Activated T-helper 2 cell treated with anti-CD3 and anti-CD28 coated beads, Interferon-gamma antibody, Interleukin-2, Interleukin-4, amounts not matched to agents 10 μg/mL and 5 μg/mL and 100 μg/mL, durations not matched to agents 14 hours and 24 hours and 36 hours (primary cell): ENCODE measurements at regions of chr2 and their contacts with region 1.

Region 1: DNA sequence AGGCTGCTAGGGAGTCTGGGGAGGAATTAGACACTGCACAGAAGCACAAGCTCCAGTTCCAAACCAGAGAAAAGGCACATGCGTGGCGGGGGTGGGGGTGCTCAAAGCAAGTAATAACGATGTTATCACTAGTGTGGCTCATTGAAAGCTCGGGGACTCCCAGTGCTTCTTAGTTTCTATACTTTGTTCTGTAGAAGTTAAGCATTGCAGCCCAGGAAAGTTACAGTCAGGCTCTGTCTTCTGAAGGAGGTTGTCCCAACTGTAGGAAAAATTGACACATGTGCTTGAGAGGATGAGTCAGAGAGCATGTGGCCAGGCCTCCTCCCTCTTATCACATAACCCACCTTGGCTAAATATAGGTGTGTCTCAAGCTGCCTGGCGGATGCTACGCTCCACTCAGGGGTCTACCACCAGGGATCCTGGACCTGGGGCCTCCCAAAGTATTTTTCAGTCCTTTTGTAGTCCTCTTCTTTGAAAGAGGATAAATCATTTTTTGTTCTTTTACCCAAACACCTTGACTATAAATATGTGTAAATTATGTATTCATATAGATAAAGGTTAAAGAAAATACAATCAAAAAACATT is 3.8 kb downstream of the GALNT5 start:
- DNase-seq: peak; percentile 37
- H3K4me3 Mint-ChIP-seq: peak overlapping the region; percentile 60
- H3K27ac Mint-ChIP-seq: peak overlapping the region; percentile 88
- H3K4me1 Mint-ChIP-seq: peaks cover 52% of the 10 kb centered on the region
- H3K27me3 Mint-ChIP-seq: peaks cover 2% of the 10 kb centered on the region

Region 2: DNA sequence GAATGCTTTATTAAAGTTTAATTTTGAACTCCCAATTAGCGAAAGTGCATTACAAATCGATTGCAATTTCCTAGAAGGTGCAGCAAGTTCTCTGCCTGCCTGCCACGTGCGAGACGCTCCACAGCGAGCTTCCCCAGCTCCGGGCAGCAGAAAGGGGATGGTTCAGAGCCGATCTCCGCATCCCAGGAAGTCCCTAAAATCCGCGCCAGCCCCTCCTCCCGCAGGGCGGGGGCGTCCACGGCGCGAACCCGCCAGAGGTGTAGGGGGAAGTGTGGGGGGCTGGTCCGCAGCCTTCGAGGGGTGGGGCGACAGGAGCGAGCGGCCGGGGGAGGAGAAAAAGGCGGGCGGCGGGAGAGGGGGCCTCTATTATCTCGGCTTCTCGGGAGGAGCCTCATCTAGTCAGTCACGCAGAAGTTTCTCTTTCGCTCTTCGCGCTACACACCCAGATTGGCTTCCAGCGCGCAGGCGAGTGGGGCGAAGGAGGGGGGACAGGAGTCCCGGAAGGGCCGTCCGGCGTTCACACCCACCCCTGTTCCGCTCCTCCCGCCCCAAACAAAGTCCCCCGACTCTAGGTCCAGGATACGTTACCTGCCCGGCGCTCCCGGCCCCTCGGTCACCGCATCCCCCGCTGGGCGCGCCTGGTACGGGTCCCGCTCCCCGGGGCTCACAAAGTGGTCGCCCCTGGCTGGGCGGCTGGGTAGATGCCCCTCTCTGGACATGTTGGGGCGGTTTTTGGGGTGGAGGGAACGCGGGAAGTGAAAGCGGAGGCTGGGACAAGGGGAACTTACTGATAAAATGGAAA is 919.6 kb before region 1 on chr2:
- intact Hi-C with region 1: loop called (anchors 2 kb)
- DNase-seq: peak; percentile 88
- H3K4me3 Mint-ChIP-seq: peak overlapping the region; percentile 87
- H3K27ac Mint-ChIP-seq: peak overlapping the region; percentile 94
- H3K4me1 Mint-ChIP-seq: peaks cover 48% of the 10 kb centered on the region
- H3K27me3 Mint-ChIP-seq: no peaks in the 10 kb centered on the region

Region 3: DNA sequence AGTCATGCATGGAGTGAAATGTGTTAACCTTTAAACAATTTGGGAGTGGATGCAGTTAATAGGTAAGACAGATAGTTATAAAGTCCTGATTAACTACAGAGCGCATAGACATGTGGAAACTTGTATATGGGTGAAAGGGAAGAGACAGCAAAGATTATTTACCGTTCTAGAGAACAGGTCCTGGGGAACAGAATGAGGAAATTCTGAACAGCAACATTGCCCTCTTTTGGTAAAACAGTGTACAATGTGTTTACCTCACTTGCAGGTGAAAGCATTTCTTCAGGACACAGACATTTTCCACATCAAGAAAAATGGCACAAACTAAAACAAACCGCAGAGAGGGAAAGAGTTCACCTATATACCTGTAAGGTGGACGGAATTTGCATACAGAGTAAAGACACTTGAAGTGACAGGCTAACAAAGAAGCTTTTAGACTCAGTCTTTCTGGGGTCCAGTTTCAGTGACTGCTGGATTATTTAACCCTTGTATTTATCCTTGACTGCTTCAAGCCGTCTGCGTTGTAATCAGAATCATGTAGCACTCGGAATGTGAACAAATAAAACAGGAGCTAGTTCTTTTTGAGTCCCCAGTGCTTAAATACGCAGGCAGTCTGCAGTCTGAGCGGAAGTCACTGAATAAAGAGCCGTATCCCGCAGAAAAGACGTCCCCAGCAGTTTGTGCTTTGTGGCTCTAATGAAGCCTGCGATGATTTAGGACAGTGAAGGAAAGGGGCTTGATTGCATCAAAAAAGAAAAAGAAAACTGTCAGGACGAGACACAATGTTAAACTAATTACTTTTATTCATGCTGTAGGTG is 368.6 kb before region 1 on chr2:
- intact Hi-C with region 1: loop called (anchors 1 kb)
- DNase-seq: no peak
- H3K4me3 Mint-ChIP-seq: peak overlapping the region; percentile 27
- H3K27ac Mint-ChIP-seq: no peak overlapping the region
- H3K4me1 Mint-ChIP-seq: peaks cover 42% of the 10 kb centered on the region
- H3K27me3 Mint-ChIP-seq: peaks cover 55% of the 10 kb centered on the region

Region 4: GRCh38 chr2:156982615-156983014 is 278.7 kb before region 1 on chr2:
- intact Hi-C with region 1: no loop called
- DNase-seq: no peak
- H3K4me3 Mint-ChIP-seq: no peak overlapping the region
- H3K27ac Mint-ChIP-seq: no peak overlapping the region
- H3K4me1 Mint-ChIP-seq: no peaks in the 10 kb centered on the region
- H3K27me3 Mint-ChIP-seq: no peaks in the 10 kb centered on the region

Region 5: GRCh38 chr2:157221394-157221988 is 39.8 kb before region 1 on chr2:
- intact Hi-C with region 1: no loop called
- DNase-seq: no peak
- H3K4me3 Mint-ChIP-seq: no peak overlapping the region
- H3K27ac Mint-ChIP-seq: no peak overlapping the region
- H3K4me1 Mint-ChIP-seq: no peaks in the 10 kb centered on the region
- H3K27me3 Mint-ChIP-seq: peaks cover 26% of the 10 kb centered on the region

Region 6: GRCh38 chr2:157302492-157303099 is 41.3 kb after region 1 on chr2:
- intact Hi-C with region 1: loop called (anchors 5 kb)
- DNase-seq: no peak
- H3K4me3 Mint-ChIP-seq: no peak overlapping the region
- H3K27ac Mint-ChIP-seq: no peak overlapping the region
- H3K4me1 Mint-ChIP-seq: peaks cover 16% of the 10 kb centered on the region
- H3K27me3 Mint-ChIP-seq: peaks cover 10% of the 10 kb centered on the region

Region 7: DNA sequence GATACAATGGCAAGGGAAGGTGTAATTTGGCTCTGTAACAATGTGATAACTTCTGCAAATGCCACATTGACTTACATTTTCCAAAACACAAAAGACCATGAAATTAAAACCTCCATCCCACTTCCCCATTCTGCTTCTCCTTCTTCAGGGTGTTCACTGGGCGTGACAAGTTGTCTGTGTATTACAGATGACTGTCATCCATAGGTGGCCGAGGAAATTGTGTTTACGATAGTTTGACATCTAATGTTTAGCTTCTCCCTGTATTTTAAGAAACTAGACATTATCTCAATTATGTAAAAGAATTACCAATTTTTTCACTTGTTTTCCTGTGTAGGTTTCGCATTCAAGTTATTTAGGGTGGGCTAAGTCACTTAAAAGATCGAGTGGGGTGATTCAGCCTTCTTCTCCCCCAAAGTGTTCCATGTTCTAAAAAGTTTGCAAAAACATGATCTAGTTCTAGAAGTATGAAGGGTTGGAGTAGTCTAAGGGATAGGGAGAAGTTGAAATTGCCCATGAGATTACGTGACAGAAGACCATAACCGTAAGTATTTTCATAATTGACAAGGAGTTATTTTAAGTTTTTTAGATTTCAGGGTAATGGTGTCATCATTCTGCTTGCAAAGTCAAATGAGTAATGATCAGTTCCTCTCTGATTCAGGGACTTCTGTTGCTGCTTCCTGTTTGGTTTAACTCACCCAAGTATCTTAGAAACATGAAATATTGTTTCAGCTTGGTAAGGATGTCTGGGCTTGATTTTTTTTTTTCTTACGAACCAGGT is 207.8 kb after region 1 on chr2:
- intact Hi-C with region 1: loop called (anchors 1 kb)
- DNase-seq: no peak
- H3K4me3 Mint-ChIP-seq: peak overlapping the region; percentile 69
- H3K27ac Mint-ChIP-seq: peak overlapping the region; percentile 96
- H3K4me1 Mint-ChIP-seq: peaks cover 86% of the 10 kb centered on the region
- H3K27me3 Mint-ChIP-seq: no peaks in the 10 kb centered on the region